ENCODE measurements at regions of chr6 and their contacts with region 1.

Region 1: GRCh38 chr6:44172731-44173500 is 14.3 kb downstream of the CAPN11 start:
- DNase-seq: peak; percentile 83
- ATAC-seq: peak; percentile 72
- H3K4me3 ChIP-seq: no peak overlapping the region
- H3K4me3 Mint-ChIP-seq: no peak overlapping the region
- H3K27ac ChIP-seq: no peak overlapping the region
- H3K27ac Mint-ChIP-seq: no peak overlapping the region
- H3K4me1 ChIP-seq: peaks cover 10 to 18% of the 10 kb centered on the region in 2 donors
- H3K4me1 Mint-ChIP-seq: peaks cover 14% of the 10 kb centered on the region
- H3K27me3 ChIP-seq: peaks cover 0 to 18% (median under 1%) of the 10 kb centered on the region in 4 experiments
- H3K27me3 Mint-ChIP-seq: peaks cover 17% of the 10 kb centered on the region
- CTCF ChIP-seq: peak; percentile 83

Region 2: GRCh38 chr6:44086931-44087574 is 85.9 kb before region 1 on chr6:
- CTCF ChIA-PET with region 1: no interaction called
- POLR2A ChIA-PET with region 1: no interaction called
- intact Hi-C with region 1: no loop called
- DNase-seq: no peak
- ATAC-seq: no peak
- H3K4me3 ChIP-seq: no peak overlapping the region
- H3K4me3 Mint-ChIP-seq: no peak overlapping the region
- H3K27ac ChIP-seq: no peak overlapping the region
- H3K27ac Mint-ChIP-seq: no peak overlapping the region
- H3K4me1 ChIP-seq: no peaks in the 10 kb centered on the region
- H3K4me1 Mint-ChIP-seq: no peaks in the 10 kb centered on the region
- H3K27me3 ChIP-seq: no peaks in the 10 kb centered on the region
- H3K27me3 Mint-ChIP-seq: no peaks in the 10 kb centered on the region
- CTCF ChIP-seq: no peak

Region 3: GRCh38 chr6:44237813-44238433 is 65.0 kb after region 1 on chr6:
- CTCF ChIA-PET with region 1: interaction called, 20 read pairs
- POLR2A ChIA-PET with region 1: no interaction called
- intact Hi-C with region 1: loop called (anchors 1 kb)
- DNase-seq: peak; percentile 87
- ATAC-seq: peak; percentile 93
- H3K4me3 ChIP-seq: peak overlapping the region; percentile 28 to 85 (median 79)
- H3K4me3 Mint-ChIP-seq: peak overlapping the region; percentile 95
- H3K27ac ChIP-seq: peak overlapping the region; percentile 90 to 91
- H3K27ac Mint-ChIP-seq: peak overlapping the region; percentile 96
- H3K4me1 ChIP-seq: peaks cover 6 to 14% of the 10 kb centered on the region in 2 donors
- H3K4me1 Mint-ChIP-seq: peaks cover 15% of the 10 kb centered on the region
- H3K27me3 ChIP-seq: no peaks in the 10 kb centered on the region
- H3K27me3 Mint-ChIP-seq: no peaks in the 10 kb centered on the region
- CTCF ChIP-seq: peak; percentile 97

Region 4: GRCh38 chr6:44257025-44257752 is 84.3 kb after region 1 on chr6 and contains the start of gene SLC35B2:
- CTCF ChIA-PET with region 1: interaction called, 10 read pairs
- POLR2A ChIA-PET with region 1: no interaction called
- intact Hi-C with region 1: loop called (anchors 1 kb)
- DNase-seq: peak; percentile 87
- ATAC-seq: peak; percentile 64
- H3K4me3 ChIP-seq: peak within 1 kb of the TSS; percentile 35 to 93 (median 90)
- H3K4me3 Mint-ChIP-seq: peak within 1 kb of the TSS; percentile 88
- H3K27ac ChIP-seq: peak within 1 kb of the TSS; percentile 83 to 98
- H3K27ac Mint-ChIP-seq: peak within 1 kb of the TSS; percentile 100
- H3K4me1 ChIP-seq: peaks cover 57 to 81% of the 10 kb centered on the region in 2 donors
- H3K4me1 Mint-ChIP-seq: peaks cover 89% of the 10 kb centered on the region
- H3K27me3 ChIP-seq: no peaks in the 10 kb centered on the region
- H3K27me3 Mint-ChIP-seq: no peaks in the 10 kb centered on the region
- CTCF ChIP-seq: peak; percentile 75
- total RNA-seq, gene SLC35B2: 29.2 and 30.0 TPM in 2 replicates

Region 5: GRCh38 chr6:44312901-44313788 is 140.2 kb after region 1 on chr6 and contains the start of gene AARS2:
- CTCF ChIA-PET with region 1: interaction called, 10 read pairs
- POLR2A ChIA-PET with region 1: no interaction called
- intact Hi-C with region 1: no loop called
- DNase-seq: peak; percentile 93
- ATAC-seq: peak; percentile 97
- H3K4me3 ChIP-seq: peak within 1 kb of the TSS; percentile 76 to 94 (median 88)
- H3K4me3 Mint-ChIP-seq: peak within 1 kb of the TSS; percentile 94
- H3K27ac ChIP-seq: peak within 1 kb of the TSS; percentile 72 to 86
- H3K27ac Mint-ChIP-seq: peak within 1 kb of the TSS; percentile 92
- H3K4me1 ChIP-seq: peaks cover 7 to 9% of the 10 kb centered on the region in 2 donors
- H3K4me1 Mint-ChIP-seq: peaks cover 17% of the 10 kb centered on the region
- H3K27me3 ChIP-seq: peaks cover 0 to 4% (median under 1%) of the 10 kb centered on the region in 4 experiments
- H3K27me3 Mint-ChIP-seq: peaks cover 2% of the 10 kb centered on the region
- CTCF ChIP-seq: peak; percentile 97
- total RNA-seq, gene AARS2: 21.3 and 22.6 TPM in 2 replicates

Region 6: GRCh38 chr6:44456070-44456965 is 283.4 kb after region 1 on chr6:
- CTCF ChIA-PET with region 1: no interaction called
- POLR2A ChIA-PET with region 1: no interaction called
- intact Hi-C with region 1: loop called (anchors 5 kb)
- DNase-seq: peak; percentile 55
- ATAC-seq: peak; percentile 83
- H3K4me3 ChIP-seq: no peak overlapping the region
- H3K4me3 Mint-ChIP-seq: no peak overlapping the region
- H3K27ac ChIP-seq: no peak overlapping the region
- H3K27ac Mint-ChIP-seq: no peak overlapping the region
- H3K4me1 ChIP-seq: no peaks in the 10 kb centered on the region
- H3K4me1 Mint-ChIP-seq: no peaks in the 10 kb centered on the region
- H3K27me3 ChIP-seq: peaks cover 0 to 5% (median 3%) of the 10 kb centered on the region in 4 experiments
- H3K27me3 Mint-ChIP-seq: peaks cover 17% of the 10 kb centered on the region
- CTCF ChIP-seq: peak; percentile 90